GM10248 (cell line): ENCODE measurements at regions of chr6 and their contacts with region 1.

Region 1: DNA sequence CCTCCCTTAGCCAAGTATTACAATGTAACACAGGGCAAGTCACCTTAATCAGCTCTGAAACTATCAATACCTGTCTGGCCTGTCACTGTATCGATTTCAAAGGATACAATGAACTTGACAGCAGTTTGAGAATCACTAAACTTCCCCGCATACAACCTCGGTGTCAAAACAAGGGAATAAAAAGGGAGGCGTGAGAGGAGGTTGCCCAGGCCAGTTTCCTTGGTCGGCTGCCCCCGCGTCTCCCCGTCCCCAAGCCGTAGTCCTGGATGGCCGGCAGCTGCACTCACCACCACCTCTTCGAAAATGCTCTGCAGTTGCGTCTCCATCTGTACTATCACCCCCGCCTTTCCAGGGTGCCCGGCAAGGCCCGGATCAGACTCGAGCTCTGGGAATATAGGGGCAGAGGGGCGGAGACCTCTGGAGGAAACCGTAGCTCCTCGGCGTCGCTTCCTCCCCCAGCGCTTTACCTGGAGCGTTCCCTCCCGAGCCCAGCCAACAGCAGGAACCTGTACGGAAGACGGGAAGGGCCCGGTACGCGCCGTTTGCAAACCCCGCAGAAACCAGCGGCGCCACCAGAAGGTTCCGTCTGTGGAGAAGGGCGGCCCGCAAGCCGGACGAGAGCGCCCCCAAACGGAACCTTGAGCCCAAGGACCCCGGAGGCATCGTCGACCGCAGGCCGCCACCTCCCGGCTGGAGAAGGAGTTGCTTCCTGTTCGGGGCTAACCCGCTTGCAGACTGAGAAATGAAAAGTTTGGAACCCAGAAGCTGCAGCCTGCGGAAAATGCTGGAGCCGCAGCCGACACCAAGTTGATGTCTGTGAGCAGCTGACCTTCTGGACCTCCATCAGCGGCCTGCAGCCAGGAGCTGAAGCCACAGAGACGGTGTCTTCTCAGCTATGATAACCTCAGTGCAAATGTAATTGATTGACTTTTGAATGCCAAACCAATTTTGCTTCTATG is at the start of gene MED23:
- DNase-seq: peak; percentile 88
- CTCF ChIP-seq: peak; percentile 100

Region 2: GRCh38 chr6:130885392-130886192 is 742.4 kb before region 1 on chr6:
- CTCF ChIA-PET with region 1: interaction called, 17 read pairs
- POLR2A ChIA-PET with region 1: no interaction called
- DNase-seq: peak; percentile 51
- CTCF ChIP-seq: peak; percentile 84

Region 3: GRCh38 chr6:131331151-131331550 is 296.9 kb before region 1 on chr6:
- CTCF ChIA-PET with region 1: no interaction called
- POLR2A ChIA-PET with region 1: no interaction called
- DNase-seq: no peak
- CTCF ChIP-seq: no peak

Region 4: GRCh38 chr6:131586543-131586942 is 41.5 kb before region 1 on chr6:
- CTCF ChIA-PET with region 1: interaction called, 16 read pairs
- POLR2A ChIA-PET with region 1: no interaction called
- DNase-seq: no peak
- CTCF ChIP-seq: no peak

Region 5: DNA sequence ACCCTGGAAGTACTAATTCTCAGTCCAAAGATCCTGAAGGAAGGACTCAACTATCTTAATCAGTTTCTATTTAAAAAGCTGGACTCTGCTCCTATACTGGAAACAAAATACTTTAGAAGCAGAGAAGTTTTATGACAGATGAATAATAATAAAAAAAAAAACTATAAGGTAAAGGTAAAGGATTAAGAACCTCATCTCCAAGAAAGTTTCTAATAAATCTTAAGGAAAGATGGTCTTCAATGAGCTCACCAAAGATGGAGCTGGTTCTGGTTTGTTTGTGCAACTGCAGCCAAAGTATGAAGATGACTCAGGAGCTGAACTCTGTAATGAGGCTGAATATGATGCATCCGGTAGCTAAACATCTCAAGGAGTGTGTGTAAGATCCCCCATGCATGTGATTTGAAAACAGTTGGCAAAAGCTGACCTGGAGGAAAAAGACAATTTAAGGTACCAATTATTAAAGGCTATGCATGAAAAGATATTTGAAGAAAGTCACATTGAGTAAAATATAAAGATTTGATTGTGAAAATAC is 25.2 kb before region 1 on chr6:
- CTCF ChIA-PET with region 1: interaction called, 28 read pairs
- POLR2A ChIA-PET with region 1: interaction called, 3 read pairs
- DNase-seq: no peak
- CTCF ChIP-seq: no peak

Region 6: DNA sequence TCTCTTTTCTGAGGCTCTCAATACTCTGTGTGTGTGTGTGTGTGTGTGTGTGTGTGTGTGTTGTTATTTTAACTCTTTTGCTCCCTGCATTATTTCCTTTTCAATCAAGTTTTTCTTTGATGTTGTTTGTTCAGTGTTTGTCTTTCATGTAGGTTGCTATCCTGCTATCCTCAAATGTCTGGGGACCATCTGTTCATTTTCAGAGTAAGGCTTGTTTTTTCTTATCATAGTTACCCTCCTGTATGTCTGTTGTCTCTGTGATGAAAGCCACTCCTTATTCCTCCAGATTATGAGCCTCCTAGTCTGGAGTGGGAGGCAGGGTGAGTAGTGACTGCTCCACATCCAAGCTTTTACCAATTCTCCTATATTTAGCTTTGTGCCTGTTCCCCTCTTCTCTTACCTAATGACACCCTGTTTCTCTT is 18.3 kb after region 1 on chr6:
- CTCF ChIA-PET with region 1: interaction called, 21 read pairs
- POLR2A ChIA-PET with region 1: no interaction called
- DNase-seq: no peak
- CTCF ChIP-seq: no peak

Region 7: GRCh38 chr6:131663577-131664165 is 35.7 kb after region 1 on chr6:
- CTCF ChIA-PET with region 1: interaction called, 16 read pairs
- POLR2A ChIA-PET with region 1: no interaction called
- DNase-seq: no peak
- CTCF ChIP-seq: no peak

Region 8: DNA sequence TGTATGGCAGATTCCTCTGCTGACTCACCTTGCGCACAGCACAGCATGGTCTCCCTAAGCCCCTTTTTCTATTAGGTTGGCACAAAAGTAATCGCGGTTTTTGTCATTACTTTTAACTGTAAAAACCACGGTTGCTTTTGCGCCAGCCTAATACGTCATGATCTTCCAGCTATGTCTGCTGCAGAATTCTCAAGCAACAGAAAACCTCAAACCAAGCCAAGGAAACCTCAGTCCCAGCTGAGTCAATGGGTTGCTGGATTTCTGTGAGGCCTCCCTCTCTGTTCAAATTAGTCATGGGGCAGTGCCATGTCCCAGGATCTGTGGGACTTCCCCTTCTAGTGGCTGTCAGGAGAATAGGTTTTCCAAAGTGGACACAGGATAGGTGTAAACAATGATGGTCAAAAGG is 164.1 kb after region 1 on chr6:
- CTCF ChIA-PET with region 1: no interaction called
- POLR2A ChIA-PET with region 1: no interaction called
- DNase-seq: no peak
- CTCF ChIP-seq: no peak